K562 (cell line): ENCODE measurements at regions of chr15 and their contacts with region 1.

Region 1: GRCh38 chr15:44663409-44664308 is at the start of gene SPG11:
- DNase-seq: peak; percentile 94 to 99 (median 96)
- ATAC-seq: peak; percentile 95
- H3K4me3 ChIP-seq: peak within 1 kb of the TSS; percentile 93
- H3K27ac ChIP-seq: peak within 1 kb of the TSS; percentile 95
- H3K4me1 ChIP-seq: peaks cover 10 to 18% of the 10 kb centered on the region in 2 experiments
- H3K27me3 ChIP-seq: no peaks in the 10 kb centered on the region
- CTCF ChIP-seq: peak; percentile 91 to 98 (median 93)
- EP300 ChIP-seq: no peak
- POLR2A ChIP-seq: peak; percentile 97
- RAD21 ChIP-seq: peak; percentile 97 to 98
- polyA plus RNA-seq, gene SPG11: 23.3 to 24.0 TPM

Region 2: GRCh38 chr15:44535523-44536301 is 127.9 kb before region 1 on chr15:
- CTCF ChIA-PET with region 1: no interaction called
- POLR2A ChIA-PET with region 1: no interaction called
- in situ Hi-C with region 1: no loop called
- intact Hi-C with region 1: no loop called
- DNase-seq: peak in 2 of 4 experiments; percentile 12 to 48
- ATAC-seq: no peak
- H3K4me3 ChIP-seq: peak overlapping the region; percentile 99
- H3K27ac ChIP-seq: peak overlapping the region; percentile 83
- H3K4me1 ChIP-seq: peaks cover 3 to 27% of the 10 kb centered on the region in 2 experiments; a peak in 4 of 5 replicates
- H3K27me3 ChIP-seq: no peaks in the 10 kb centered on the region
- CTCF ChIP-seq: no peak
- EP300 ChIP-seq: no peak
- POLR2A ChIP-seq: no peak
- RAD21 ChIP-seq: no peak

Region 3: GRCh38 chr15:44676676-44677075 is 13.0 kb after region 1 on chr15:
- CTCF ChIA-PET with region 1: no interaction called
- POLR2A ChIA-PET with region 1: interaction called, 12 read pairs
- in situ Hi-C with region 1: no loop called
- intact Hi-C with region 1: no loop called
- DNase-seq: no peak
- ATAC-seq: no peak; the same call in 1 of the 3 replicates
- H3K4me3 ChIP-seq: no peak overlapping the region
- H3K27ac ChIP-seq: no peak overlapping the region
- H3K4me1 ChIP-seq: peaks cover 6 to 7% of the 10 kb centered on the region in 2 experiments; a peak in 4 of 5 replicates
- H3K27me3 ChIP-seq: no peaks in the 10 kb centered on the region
- CTCF ChIP-seq: no peak
- EP300 ChIP-seq: no peak
- POLR2A ChIP-seq: no peak
- RAD21 ChIP-seq: no peak

Region 4: DNA sequence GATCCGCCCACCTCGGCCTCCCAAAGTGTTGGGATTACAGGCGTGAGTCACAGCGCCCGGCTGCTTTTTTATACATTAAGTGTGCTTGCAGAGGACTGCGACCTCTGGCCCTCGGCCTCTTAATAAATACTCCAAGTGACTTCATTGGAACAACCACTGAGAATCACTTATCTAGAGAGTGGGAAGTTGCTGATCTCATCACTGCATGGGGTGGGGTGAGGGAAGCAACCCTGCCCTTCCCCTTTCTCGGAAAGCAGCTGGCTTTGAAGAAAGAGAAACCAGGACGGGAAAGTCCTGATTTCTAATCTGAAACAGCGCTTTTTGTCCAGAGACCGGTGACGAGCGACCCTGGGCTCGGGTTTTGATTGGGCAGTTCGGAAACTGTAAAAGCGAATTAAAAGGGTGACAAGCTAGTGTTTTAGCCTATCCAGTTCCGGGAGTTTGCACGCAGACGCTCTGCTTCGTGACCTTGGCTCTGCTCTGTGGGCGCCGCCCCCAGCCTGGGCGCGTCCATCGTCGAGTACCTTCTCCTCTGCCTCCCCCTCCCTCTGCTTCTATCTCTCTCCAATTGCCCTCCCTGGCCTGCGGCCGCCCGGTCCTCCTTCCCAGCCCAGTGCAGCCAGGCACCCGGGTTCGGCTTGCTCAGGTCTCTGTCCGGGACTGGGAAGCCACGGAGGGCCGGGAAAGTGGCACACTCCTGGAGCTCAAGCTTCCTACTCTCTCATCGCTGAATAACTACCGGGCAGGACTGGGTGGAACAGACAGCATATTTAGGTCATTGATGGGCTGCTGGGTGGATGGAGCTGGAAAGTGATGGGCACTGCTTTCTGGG is 65.1 kb after region 1 on chr15:
- CTCF ChIA-PET with region 1: no interaction called
- POLR2A ChIA-PET with region 1: interaction called, 31 read pairs
- in situ Hi-C with region 1: no loop called
- intact Hi-C with region 1: loop called (anchors 1 kb)
- DNase-seq: peak; percentile 83 to 95 (median 88)
- ATAC-seq: peak; percentile 94
- H3K4me3 ChIP-seq: peak overlapping the region; percentile 52
- H3K27ac ChIP-seq: peak overlapping the region; percentile 77
- H3K4me1 ChIP-seq: peaks cover 20 to 29% of the 10 kb centered on the region in 2 experiments
- H3K27me3 ChIP-seq: no peaks in the 10 kb centered on the region
- CTCF ChIP-seq: peak in 1 of 3 experiments; percentile 11; a peak in 1 of 6 replicates
- EP300 ChIP-seq: peak; percentile 79
- POLR2A ChIP-seq: peak; percentile 77
- RAD21 ChIP-seq: peak in 1 of 2 experiments; percentile 26; a peak in 2 of 4 replicates

Region 5: DNA sequence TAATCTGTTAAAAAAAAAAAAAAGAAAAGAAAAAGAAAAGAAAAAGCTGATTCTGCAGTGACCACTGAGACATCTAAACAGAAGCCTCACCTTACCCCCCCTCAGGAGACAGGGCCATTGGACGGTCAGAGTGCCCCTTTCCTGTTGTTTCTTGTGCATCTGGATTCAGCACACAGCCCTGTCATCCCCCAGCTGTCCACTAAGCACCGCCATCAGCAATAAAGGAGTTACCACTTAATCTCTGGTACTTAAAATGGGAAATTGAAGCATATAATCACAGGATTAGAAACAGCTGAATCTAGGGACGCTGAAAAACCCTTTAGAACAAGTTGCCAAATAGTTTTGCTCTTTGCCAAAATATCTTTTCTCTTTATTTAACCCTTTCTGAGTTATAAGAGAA is 135.2 kb after region 1 on chr15:
- CTCF ChIA-PET with region 1: no interaction called
- POLR2A ChIA-PET with region 1: no interaction called
- in situ Hi-C with region 1: no loop called
- intact Hi-C with region 1: no loop called
- DNase-seq: peak; percentile 26 to 46 (median 40)
- ATAC-seq: peak; percentile 87
- H3K4me3 ChIP-seq: no peak overlapping the region
- H3K27ac ChIP-seq: no peak overlapping the region
- H3K4me1 ChIP-seq: peaks cover 0 to 14% of the 10 kb centered on the region in 2 experiments; a peak in 3 of 5 replicates
- H3K27me3 ChIP-seq: no peaks in the 10 kb centered on the region
- CTCF ChIP-seq: peak; percentile 11 to 40 (median 40); a peak in 3 of 6 replicates
- EP300 ChIP-seq: no peak
- POLR2A ChIP-seq: no peak
- RAD21 ChIP-seq: peak; percentile 11 to 40; a peak in 1 of 4 replicates